Transverse colon (tissue), 4 donors: ENCODE measurements at regions of chr11 and their contacts with region 1.

Region 1: GRCh38 chr11:101848262-101848661 is 66.5 kb upstream of the CEP126 start:
- DNase-seq: no peak
- H3K4me3 ChIP-seq: no peak overlapping the region
- H3K27ac ChIP-seq: no peak overlapping the region
- H3K4me1 ChIP-seq: no peaks in the 10 kb centered on the region
- H3K27me3 ChIP-seq: no peaks in the 10 kb centered on the region
- CTCF ChIP-seq: peak; percentile 36 to 55 (median 45)
- EP300 ChIP-seq: no peak
- POLR2A ChIP-seq: no peak

Region 2: GRCh38 chr11:101436511-101437142 is 411.6 kb before region 1 on chr11:
- in situ Hi-C with region 1: loop called in 2 of 4 experiments (anchors 25 kb)
- intact Hi-C with region 1: no loop called
- DNase-seq: peak; percentile 34
- H3K4me3 ChIP-seq: no peak overlapping the region
- H3K27ac ChIP-seq: no peak overlapping the region
- H3K4me1 ChIP-seq: no peaks in the 10 kb centered on the region
- H3K27me3 ChIP-seq: no peaks in the 10 kb centered on the region
- CTCF ChIP-seq: peak; percentile 44 to 56 (median 52)
- EP300 ChIP-seq: no peak
- POLR2A ChIP-seq: no peak

Region 3: GRCh38 chr11:101456812-101457211 is 391.4 kb before region 1 on chr11:
- in situ Hi-C with region 1: loop called in 2 of 4 experiments (anchors 10 to 25 kb)
- intact Hi-C with region 1: no loop called
- DNase-seq: no peak
- H3K4me3 ChIP-seq: no peak overlapping the region
- H3K27ac ChIP-seq: no peak overlapping the region
- H3K4me1 ChIP-seq: no peaks in the 10 kb centered on the region
- H3K27me3 ChIP-seq: no peaks in the 10 kb centered on the region
- CTCF ChIP-seq: peak; percentile 22 to 42 (median 36)
- EP300 ChIP-seq: no peak
- POLR2A ChIP-seq: no peak

Region 4: DNA sequence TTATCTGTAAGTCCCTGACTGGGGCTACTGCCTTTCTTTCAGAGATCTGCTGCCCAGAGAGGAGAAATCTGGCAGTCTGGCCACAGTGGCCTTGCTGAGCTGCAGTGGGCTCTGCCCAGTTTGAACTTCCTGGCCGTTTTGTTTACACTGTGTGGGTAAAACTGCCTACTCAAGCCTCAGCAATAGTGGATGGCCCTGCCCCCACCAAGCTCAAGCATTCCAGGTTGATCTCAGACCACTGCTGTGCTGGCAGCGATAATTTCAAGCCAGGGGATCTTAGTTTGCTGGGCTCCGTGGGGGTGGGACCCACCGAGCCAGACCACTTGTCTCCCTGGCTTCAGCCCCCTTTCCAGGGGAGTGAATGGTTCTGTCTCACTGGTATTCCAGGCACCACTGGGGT is 381.9 kb before region 1 on chr11:
- in situ Hi-C with region 1: loop called in 2 of 4 experiments (anchors 10 to 25 kb)
- intact Hi-C with region 1: no loop called
- DNase-seq: no peak
- H3K4me3 ChIP-seq: no peak overlapping the region
- H3K27ac ChIP-seq: no peak overlapping the region
- H3K4me1 ChIP-seq: peaks cover 0 to 9% (median 0%) of the 10 kb centered on the region in 4 donors
- H3K27me3 ChIP-seq: no peaks in the 10 kb centered on the region
- CTCF ChIP-seq: no peak
- EP300 ChIP-seq: no peak
- POLR2A ChIP-seq: no peak